Heart left ventricle (tissue), 16 donors: ENCODE measurements at regions of chr15 and their contacts with region 1.

Region 1: DNA sequence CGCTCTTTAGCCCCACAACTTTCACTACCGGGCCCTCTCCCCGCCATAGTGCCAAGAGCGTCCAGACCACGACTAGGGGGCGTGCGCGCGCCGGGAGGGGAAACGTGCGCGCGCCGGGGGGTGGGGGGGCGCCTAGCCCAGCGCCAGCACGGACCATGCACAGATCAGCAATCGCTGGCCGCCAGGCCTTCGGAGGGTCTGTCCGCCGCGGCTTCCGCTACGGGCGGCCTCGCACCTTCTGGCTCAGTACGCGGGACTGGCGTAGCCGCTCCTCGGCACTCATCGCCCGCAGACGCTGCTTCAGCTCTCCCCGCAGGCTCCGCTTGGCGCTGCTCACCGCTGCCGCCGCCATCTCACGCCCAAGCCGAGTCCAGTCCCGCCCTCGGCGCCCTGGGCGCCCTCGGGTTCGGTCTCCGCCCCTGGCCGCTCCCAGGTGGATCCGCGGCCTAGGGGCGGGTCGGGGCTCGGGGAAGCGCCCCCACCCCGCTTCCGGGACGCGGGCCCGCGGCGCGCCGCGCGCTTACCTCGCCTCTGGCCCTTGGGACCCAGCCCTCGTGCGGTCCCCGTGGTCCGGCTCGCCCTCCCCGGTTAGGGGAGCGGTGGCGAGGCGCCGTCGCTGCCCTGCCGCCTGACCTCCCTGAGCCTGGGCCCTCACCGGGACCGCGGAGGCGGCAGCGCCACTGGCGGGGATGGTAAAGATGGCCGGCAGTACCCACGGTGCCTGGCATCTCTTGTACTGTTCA is at the start of gene MTHFS:
- DNase-seq: peak; percentile 81 to 92 (median 83)
- ATAC-seq: peak; percentile 93 to 99 (median 98)
- H3K4me3 ChIP-seq: peak within 1 kb of the TSS; percentile 64 to 92 (median 82)
- H3K27ac ChIP-seq: peak within 1 kb of the TSS; percentile 79 to 98 (median 92)
- H3K4me1 ChIP-seq: peaks cover 0 to 30% (median 7%) of the 10 kb centered on the region in 12 donors
- H3K27me3 ChIP-seq: no peaks in the 10 kb centered on the region
- CTCF ChIP-seq: peak in 11 of 12 donors; percentile 27 to 70 (median 52)
- POLR2A ChIP-seq: peak in 1 of 2 donors; percentile 43
- total RNA-seq, gene MTHFS: 5.7 to 24.1 (median 13.2) TPM

Region 2: DNA sequence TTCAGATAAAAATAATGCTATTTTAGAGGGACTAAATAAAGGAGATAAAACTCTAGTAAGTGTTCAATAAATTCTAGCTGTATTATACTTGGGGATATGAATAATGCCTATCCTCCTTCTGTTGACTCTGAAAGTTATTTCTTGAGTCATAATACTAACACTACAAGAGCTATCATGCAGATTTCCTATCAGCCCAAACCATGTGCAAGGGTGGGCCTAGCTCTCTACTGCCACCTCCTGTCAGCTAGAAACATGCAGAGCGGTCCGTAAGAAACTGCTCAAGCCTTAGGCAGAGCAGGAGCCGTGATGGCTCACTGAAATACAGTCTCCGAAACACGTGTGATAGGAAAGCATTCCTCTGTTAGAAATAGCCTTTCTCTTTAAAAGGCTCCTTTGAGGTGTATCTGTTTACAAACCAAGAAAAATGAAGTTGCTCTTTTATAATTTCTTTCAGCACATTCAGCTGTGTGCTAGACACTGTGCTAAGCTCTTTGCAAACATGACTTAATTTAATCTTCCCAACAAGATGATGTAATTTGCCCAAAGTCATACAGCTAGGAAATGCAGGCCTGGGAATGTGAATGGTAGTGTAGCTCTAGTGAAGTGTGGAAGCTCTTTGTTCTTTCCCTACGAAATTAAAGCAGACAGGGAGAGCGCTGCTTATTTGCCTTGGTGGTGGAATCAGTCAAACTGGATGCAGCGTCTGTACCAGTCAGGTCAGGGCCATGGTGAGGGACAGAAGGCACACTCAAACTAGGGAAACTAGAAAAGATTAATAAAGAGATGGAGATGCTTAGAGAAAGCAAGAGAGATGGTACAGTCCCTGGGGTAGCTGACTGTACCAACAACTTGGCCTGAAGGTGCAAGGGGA is 43.1 kb before region 1 on chr15:
- intact Hi-C with region 1: no loop called
- DNase-seq: peak in 4 of 5 donors; percentile 26 to 53 (median 45)
- ATAC-seq: peak; percentile 55 to 95 (median 92)
- H3K4me3 ChIP-seq: no peak overlapping the region
- H3K27ac ChIP-seq: no peak overlapping the region
- H3K4me1 ChIP-seq: peaks cover 0 to 6% (median 0%) of the 10 kb centered on the region in 12 donors
- H3K27me3 ChIP-seq: no peaks in the 10 kb centered on the region
- CTCF ChIP-seq: peak; percentile 79 to 97 (median 90)
- POLR2A ChIP-seq: no peak

Region 3: GRCh38 chr15:79923515-79924395 is 26.9 kb after region 1 on chr15:
- intact Hi-C with region 1: loop called in 3 of 10 experiments (anchors 1 to 2 kb)
- DNase-seq: peak; percentile 93 to 97 (median 96)
- ATAC-seq: peak; percentile 99
- H3K4me3 ChIP-seq: peak overlapping the region; percentile 56 to 98 (median 85)
- H3K27ac ChIP-seq: peak overlapping the region; percentile 81 to 98 (median 94)
- H3K4me1 ChIP-seq: peaks cover 0 to 20% (median 5%) of the 10 kb centered on the region in 12 donors
- H3K27me3 ChIP-seq: no peaks in the 10 kb centered on the region
- CTCF ChIP-seq: no peak
- POLR2A ChIP-seq: peak; percentile 35 to 68

Region 4: DNA sequence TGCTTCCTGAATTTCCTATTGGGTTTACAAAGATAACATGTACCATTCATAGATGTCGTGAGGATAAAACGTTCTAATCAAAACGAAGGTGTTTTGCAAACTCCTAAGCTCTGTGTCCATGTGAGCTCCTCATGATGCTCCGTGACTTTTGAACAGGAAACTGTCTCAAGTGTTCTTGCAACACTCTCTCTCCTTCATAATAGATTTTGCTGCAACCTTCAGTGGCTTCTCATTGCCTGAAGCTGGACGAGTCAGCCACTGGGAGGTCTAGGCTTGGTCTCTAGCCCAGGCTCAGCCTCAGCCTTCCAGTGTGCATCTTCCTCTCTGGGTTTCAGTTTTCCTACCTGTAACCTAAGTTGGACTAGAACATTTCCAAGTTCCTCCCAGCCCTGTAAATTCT is 92.9 kb after region 1 on chr15:
- intact Hi-C with region 1: loop called in 5 of 10 experiments (anchors 2 to 5 kb)
- DNase-seq: no peak
- ATAC-seq: no peak
- H3K4me3 ChIP-seq: no peak overlapping the region
- H3K27ac ChIP-seq: no peak overlapping the region
- H3K4me1 ChIP-seq: peaks cover 0 to 15% (median 0%) of the 10 kb centered on the region in 12 donors
- H3K27me3 ChIP-seq: no peaks in the 10 kb centered on the region
- CTCF ChIP-seq: no peak
- POLR2A ChIP-seq: no peak

Region 5: DNA sequence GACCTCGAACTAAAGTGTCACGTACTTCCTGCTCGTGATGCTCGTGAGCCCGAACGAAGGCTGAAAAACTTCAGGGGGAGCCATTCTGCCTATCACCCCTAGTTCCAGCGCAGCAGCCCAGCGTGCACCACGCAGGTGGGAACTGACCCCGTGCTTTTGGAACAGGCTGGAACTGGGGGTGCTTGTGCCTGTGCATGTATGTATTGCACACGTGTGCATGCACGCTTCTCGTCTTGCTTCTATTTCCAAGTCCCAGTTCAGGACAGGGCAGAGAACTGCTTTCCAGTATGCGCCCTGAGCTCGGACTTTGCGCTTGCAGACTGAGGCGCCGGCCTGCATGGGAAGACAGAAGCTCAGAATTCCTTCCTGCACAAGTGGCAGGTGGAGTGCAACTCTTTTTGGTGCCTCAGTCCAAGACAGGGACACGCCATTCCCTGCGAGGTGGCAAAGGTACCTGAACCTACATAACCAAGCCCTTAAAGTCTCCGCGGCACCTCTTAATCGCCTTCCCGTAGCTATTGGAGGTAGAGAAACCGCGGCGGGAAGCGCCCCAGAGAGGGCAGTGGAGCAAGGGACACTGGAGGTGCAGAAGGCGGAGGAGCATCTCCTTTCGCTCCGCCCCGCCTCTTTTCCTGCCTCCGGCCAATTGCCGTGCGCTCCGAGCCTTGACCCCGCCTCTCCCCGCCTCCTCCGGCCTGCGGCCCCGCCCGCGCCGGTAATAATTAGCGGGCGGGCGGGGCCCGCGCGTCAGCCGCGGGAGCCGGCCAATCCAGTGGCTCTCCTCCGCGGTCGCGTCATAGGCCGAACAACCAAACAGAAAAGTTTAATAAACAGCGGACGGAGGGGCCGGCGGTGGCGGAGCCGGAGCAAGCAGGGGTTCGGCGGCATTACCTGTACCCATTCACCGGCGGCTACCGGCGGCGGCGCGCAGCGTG is 162.3 kb after region 1 on chr15 and contains the start of gene ZFAND6:
- intact Hi-C with region 1: loop called in 1 of 10 experiments (anchors 10 kb)
- DNase-seq: peak; percentile 95 to 98 (median 96)
- ATAC-seq: peak; percentile 98 to 99 (median 98)
- H3K4me3 ChIP-seq: peak within 1 kb of the TSS; percentile 66 to 95 (median 92)
- H3K27ac ChIP-seq: peak within 1 kb of the TSS; percentile 88 to 96 (median 93)
- H3K4me1 ChIP-seq: peaks cover 0 to 39% (median 22%) of the 10 kb centered on the region in 12 donors
- H3K27me3 ChIP-seq: peaks cover 0 to 4% (median 0%) of the 10 kb centered on the region in 9 donors
- CTCF ChIP-seq: peak in 2 of 12 donors; percentile 5 to 15
- POLR2A ChIP-seq: peak; percentile 76 to 85
- total RNA-seq, gene ZFAND6: 67.4 to 105 (median 79.9) TPM

Region 6: DNA sequence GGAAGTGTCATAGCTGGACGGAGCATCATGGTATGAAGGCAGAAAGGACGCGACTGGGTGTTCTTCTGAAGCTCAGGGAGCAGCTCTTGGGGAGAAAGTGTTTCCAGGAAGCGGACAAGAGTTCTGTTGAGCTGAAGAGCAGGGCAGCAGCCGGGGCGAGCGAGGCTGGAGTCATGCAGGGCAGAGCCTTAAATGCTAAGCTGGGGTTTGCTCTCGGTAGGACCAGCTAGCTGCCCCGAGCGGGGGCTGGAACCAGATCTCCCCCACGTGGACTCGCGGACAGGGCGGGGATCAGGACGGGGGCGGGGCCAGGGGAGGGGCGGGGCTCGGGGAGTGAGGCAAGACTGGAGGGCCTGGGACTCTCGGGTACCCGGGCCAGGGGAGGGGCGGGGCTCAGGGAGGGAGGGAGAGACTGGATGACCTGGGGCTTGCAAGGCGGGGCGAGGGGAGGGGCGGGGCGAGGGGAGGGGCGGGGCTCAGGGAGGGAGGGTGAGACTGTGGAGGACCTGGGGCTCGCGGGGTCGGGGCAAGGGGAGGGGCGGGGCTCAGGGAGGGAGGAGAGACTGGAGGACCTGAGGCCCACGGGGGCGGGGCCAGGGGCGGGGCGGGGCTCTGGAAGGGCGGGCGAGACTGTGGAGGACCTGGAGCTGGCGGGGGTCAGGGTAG is 255.5 kb after region 1 on chr15:
- intact Hi-C with region 1: loop called in 1 of 10 experiments (anchors 10 kb)
- DNase-seq: peak; percentile 93 to 98 (median 96)
- ATAC-seq: peak; percentile 88 to 95 (median 92)
- H3K4me3 ChIP-seq: peak overlapping the region; percentile 41 to 95 (median 69)
- H3K27ac ChIP-seq: peak overlapping the region in 11 of 12 donors; percentile 54 to 86 (median 71)
- H3K4me1 ChIP-seq: peaks cover 0 to 38% (median 13%) of the 10 kb centered on the region in 12 donors
- H3K27me3 ChIP-seq: no peaks in the 10 kb centered on the region
- CTCF ChIP-seq: no peak
- POLR2A ChIP-seq: no peak

Region 7: GRCh38 chr15:80173022-80173759 is 276.4 kb after region 1 on chr15:
- intact Hi-C with region 1: loop called in 3 of 10 experiments (anchors 10 kb)
- DNase-seq: peak in 3 of 5 donors; percentile 48 to 52 (median 49)
- ATAC-seq: peak; percentile 42 to 77 (median 54)
- H3K4me3 ChIP-seq: no peak overlapping the region
- H3K27ac ChIP-seq: no peak overlapping the region
- H3K4me1 ChIP-seq: peaks cover 0 to 12% (median 0%) of the 10 kb centered on the region in 12 donors
- H3K27me3 ChIP-seq: no peaks in the 10 kb centered on the region
- CTCF ChIP-seq: peak; percentile 45 to 72 (median 62)
- POLR2A ChIP-seq: no peak

Region 8: GRCh38 chr15:80599359-80599758 is 702.6 kb after region 1 on chr15:
- intact Hi-C with region 1: no loop called
- DNase-seq: no peak
- ATAC-seq: no peak
- H3K4me3 ChIP-seq: no peak overlapping the region
- H3K27ac ChIP-seq: no peak overlapping the region
- H3K4me1 ChIP-seq: no peaks in the 10 kb centered on the region
- H3K27me3 ChIP-seq: peaks cover 0 to 3% (median 0%) of the 10 kb centered on the region in 9 donors
- CTCF ChIP-seq: no peak
- POLR2A ChIP-seq: no peak